Activated CD4-positive, alpha-beta T cell treated with anti-CD3 and anti-CD28 coated beads, Interleukin-2, amount 10 ng/mL, durations not matched to agents 24 days and 14 days (primary cell): ENCODE measurements at regions of chr1 and their contacts with region 1.

Region 1: GRCh38 chr1:84944767-84945486 is 51.9 kb upstream of the LPAR3 start:
- DNase-seq: peak; percentile 94
- H3K4me3 Mint-ChIP-seq: peak overlapping the region; percentile 80
- H3K27ac Mint-ChIP-seq: peak overlapping the region; percentile 86
- H3K4me1 Mint-ChIP-seq: peaks cover 27% of the 10 kb centered on the region
- H3K27me3 Mint-ChIP-seq: no peaks in the 10 kb centered on the region

Region 2: GRCh38 chr1:84853741-84854721 is 90.9 kb before region 1 on chr1:
- intact Hi-C with region 1: loop called (anchors 2 kb)
- DNase-seq: peak; percentile 88
- H3K4me3 Mint-ChIP-seq: peak overlapping the region; percentile 64
- H3K27ac Mint-ChIP-seq: peak overlapping the region; percentile 74
- H3K4me1 Mint-ChIP-seq: peaks cover 41% of the 10 kb centered on the region
- H3K27me3 Mint-ChIP-seq: no peaks in the 10 kb centered on the region

Region 3: DNA sequence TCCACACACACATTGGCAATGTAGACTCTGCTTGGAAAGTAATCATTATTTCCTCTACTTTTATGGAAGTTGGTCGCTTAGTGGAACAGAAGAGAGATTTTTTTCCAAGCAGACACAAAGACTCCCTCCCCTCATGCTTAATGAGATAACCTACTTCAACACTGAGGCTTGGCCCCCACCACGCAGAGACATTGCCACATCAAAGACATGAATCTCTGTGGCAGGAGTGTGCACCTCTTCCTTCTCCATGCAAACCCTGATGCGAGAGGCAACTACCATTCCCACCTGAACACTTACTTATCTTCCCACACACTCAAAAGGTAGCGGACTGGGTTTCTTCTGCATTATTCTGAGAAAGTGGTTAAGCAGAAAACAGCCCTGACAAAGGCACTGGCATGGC is 14.6 kb before region 1 on chr1:
- intact Hi-C with region 1: no loop called
- DNase-seq: no peak
- H3K4me3 Mint-ChIP-seq: no peak overlapping the region
- H3K27ac Mint-ChIP-seq: no peak overlapping the region
- H3K4me1 Mint-ChIP-seq: peaks cover 13% of the 10 kb centered on the region
- H3K27me3 Mint-ChIP-seq: no peaks in the 10 kb centered on the region

Region 4: GRCh38 chr1:84973498-84974334 is 28.8 kb after region 1 on chr1:
- intact Hi-C with region 1: loop called (anchors 1 kb)
- DNase-seq: peak; percentile 65
- H3K4me3 Mint-ChIP-seq: peak overlapping the region; percentile 61
- H3K27ac Mint-ChIP-seq: peak overlapping the region; percentile 83
- H3K4me1 Mint-ChIP-seq: peaks cover 65% of the 10 kb centered on the region
- H3K27me3 Mint-ChIP-seq: no peaks in the 10 kb centered on the region

Region 5: DNA sequence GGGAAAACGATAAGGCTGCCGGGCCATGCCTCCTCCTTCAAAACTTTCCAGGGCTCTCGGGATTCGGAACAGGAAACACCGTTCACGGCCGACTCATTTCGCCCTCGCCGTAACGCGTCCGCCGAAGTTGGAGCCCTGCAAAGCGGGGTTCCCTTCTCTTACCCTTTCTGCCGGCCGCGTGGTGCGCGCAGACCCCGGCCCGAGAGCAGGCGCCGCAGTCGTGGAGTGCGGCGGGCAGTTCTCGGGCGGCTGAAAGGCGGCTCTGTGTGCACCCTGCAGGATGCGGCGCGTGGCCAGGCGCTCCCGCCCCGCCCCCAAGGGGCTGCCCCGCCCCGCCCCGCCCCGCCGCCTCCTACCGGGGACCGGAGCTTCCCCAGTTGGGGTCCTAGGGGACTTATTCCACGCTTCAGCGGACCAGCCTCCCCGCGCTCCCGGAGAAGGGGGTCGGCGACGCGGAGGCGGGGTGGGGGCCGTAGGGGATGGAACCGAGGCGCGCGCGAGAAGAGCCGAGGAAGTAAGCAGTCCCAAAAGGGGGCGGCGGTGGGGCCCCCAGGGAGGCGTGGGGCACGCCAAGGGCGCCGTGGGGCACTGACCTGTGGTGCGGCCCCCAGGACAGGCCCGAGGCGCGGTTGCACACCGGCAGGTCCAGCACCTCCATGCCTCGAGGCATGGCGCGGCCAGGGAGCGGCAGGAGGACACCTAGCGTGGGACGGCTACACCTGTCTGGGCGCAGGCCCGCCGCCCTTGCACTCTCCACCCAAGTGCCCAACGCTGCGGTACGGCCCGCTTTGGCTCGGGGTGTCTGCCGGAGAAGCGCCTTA is 52.1 kb after region 1 on chr1 and contains the start of gene MCOLN2:
- intact Hi-C with region 1: loop called (anchors 1 kb)
- DNase-seq: peak; percentile 88
- H3K4me3 Mint-ChIP-seq: peak within 1 kb of the TSS; percentile 85
- H3K27ac Mint-ChIP-seq: peak within 1 kb of the TSS; percentile 89
- H3K4me1 Mint-ChIP-seq: peaks cover 47% of the 10 kb centered on the region
- H3K27me3 Mint-ChIP-seq: peaks cover 36% of the 10 kb centered on the region
- total RNA-seq, gene MCOLN2: 92.3 and 95.6 TPM in 2 replicates

Region 6: GRCh38 chr1:85048296-85049064 is 103.6 kb after region 1 on chr1 and contains the start of gene MCOLN3:
- intact Hi-C with region 1: loop called (anchors 1 kb)
- DNase-seq: peak; percentile 83
- H3K4me3 Mint-ChIP-seq: peak within 1 kb of the TSS; percentile 70
- H3K27ac Mint-ChIP-seq: peak within 1 kb of the TSS; percentile 21
- H3K4me1 Mint-ChIP-seq: peaks cover 26% of the 10 kb centered on the region
- H3K27me3 Mint-ChIP-seq: peaks cover 44% of the 10 kb centered on the region
- total RNA-seq, gene MCOLN3: 0.51 and 0.66 TPM in 2 replicates

Region 7: GRCh38 chr1:85091671-85092280 is 146.8 kb after region 1 on chr1:
- intact Hi-C with region 1: loop called (anchors 1 kb)
- DNase-seq: peak; percentile 58
- H3K4me3 Mint-ChIP-seq: peak overlapping the region; percentile 71
- H3K27ac Mint-ChIP-seq: no peak overlapping the region
- H3K4me1 Mint-ChIP-seq: peaks cover 4% of the 10 kb centered on the region
- H3K27me3 Mint-ChIP-seq: peaks cover 19% of the 10 kb centered on the region

Region 8: GRCh38 chr1:85259118-85259911 is 314.4 kb after region 1 on chr1 and contains the start of gene C1orf52:
- intact Hi-C with region 1: loop called (anchors 1 kb)
- DNase-seq: peak; percentile 99
- H3K4me3 Mint-ChIP-seq: peak within 1 kb of the TSS; percentile 96
- H3K27ac Mint-ChIP-seq: peak within 1 kb of the TSS; percentile 93
- H3K4me1 Mint-ChIP-seq: peaks cover 24% of the 10 kb centered on the region
- H3K27me3 Mint-ChIP-seq: no peaks in the 10 kb centered on the region
- total RNA-seq, gene C1orf52: 29.8 and 32.3 TPM in 2 replicates